Activated naive CD4-positive, alpha-beta T cell treated with anti-CD3 and anti-CD28 coated beads for 36 hours (primary cell): ENCODE measurements at regions of chr12 and their contacts with region 1.

Region 1: GRCh38 chr12:30847259-30847658 is 79.3 kb upstream of the TSPAN11 start:
- DNase-seq: peak; percentile 32
- H3K4me3 Mint-ChIP-seq: no peak overlapping the region
- H3K27ac Mint-ChIP-seq: no peak overlapping the region
- H3K4me1 Mint-ChIP-seq: peaks cover 4% of the 10 kb centered on the region
- H3K27me3 Mint-ChIP-seq: peaks cover 5% of the 10 kb centered on the region

Region 2: DNA sequence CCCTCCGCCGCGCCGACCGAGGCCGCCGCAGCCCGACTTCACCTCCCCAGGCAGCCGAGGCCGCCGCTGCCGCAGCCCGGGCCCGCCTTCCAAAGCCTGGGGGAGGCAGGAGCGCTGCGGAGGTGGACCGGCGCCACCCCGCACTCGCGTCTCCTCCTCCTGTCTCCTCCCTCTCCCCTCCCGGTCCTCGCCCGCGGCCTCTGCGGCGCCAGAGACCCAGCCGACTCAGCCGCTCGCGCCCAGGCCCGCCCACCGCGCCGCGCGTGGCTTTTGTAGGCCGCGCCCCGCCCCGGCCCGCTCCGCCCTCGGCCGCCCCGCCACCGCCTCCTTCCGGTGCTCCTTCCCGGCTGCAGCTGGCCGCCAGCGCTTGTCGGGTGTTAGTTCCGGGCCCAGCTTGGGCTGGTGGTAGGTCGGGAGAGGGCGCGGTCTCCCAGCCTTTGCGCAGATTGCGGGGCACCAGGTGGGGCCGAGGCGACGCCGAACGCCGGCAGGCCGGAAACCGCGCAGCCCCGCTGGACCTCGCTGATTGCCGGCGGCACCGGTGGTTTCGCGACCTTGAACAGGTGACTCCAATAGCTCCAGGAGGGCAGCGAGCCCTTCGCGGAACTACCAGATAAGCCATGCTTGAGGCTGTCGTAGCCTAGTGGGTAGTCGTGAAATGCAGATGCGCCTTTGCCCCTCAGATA is 92.4 kb before region 1 on chr12 and contains the start of gene CAPRIN2:
- CTCF ChIA-PET with region 1: interaction called, 7 read pairs
- intact Hi-C with region 1: loop called (anchors 2 kb)
- DNase-seq: peak; percentile 95
- H3K4me3 Mint-ChIP-seq: peak within 1 kb of the TSS; percentile 94
- H3K27ac Mint-ChIP-seq: peak within 1 kb of the TSS; percentile 51
- H3K4me1 Mint-ChIP-seq: peaks cover 38% of the 10 kb centered on the region
- H3K27me3 Mint-ChIP-seq: no peaks in the 10 kb centered on the region
- total RNA-seq, gene CAPRIN2: 10.3 to 11.3 TPM

Region 3: DNA sequence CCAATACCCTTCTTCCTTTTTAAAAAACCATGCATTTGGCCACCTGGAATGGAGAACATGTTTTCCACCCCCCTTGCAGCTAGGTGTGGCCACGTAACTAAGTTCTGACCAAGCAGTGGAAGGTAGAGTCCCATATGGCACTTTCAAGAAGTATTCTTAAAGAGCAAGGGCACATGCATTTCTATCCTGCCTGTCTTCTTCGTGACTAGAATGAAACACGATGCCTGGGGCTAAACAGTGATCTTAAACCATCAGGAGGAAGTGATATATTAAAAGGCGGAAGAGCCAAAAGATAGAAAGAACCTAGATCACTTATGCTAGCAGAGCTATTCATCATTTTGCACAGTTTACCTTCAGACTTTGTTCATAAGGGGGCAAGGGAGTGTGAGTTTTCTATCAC is 210.4 kb after region 1 on chr12:
- CTCF ChIA-PET with region 1: no interaction called
- intact Hi-C with region 1: loop called (anchors 5 kb)
- DNase-seq: no peak
- H3K4me3 Mint-ChIP-seq: no peak overlapping the region
- H3K27ac Mint-ChIP-seq: no peak overlapping the region
- H3K4me1 Mint-ChIP-seq: peaks cover 5% of the 10 kb centered on the region
- H3K27me3 Mint-ChIP-seq: no peaks in the 10 kb centered on the region

Region 4: DNA sequence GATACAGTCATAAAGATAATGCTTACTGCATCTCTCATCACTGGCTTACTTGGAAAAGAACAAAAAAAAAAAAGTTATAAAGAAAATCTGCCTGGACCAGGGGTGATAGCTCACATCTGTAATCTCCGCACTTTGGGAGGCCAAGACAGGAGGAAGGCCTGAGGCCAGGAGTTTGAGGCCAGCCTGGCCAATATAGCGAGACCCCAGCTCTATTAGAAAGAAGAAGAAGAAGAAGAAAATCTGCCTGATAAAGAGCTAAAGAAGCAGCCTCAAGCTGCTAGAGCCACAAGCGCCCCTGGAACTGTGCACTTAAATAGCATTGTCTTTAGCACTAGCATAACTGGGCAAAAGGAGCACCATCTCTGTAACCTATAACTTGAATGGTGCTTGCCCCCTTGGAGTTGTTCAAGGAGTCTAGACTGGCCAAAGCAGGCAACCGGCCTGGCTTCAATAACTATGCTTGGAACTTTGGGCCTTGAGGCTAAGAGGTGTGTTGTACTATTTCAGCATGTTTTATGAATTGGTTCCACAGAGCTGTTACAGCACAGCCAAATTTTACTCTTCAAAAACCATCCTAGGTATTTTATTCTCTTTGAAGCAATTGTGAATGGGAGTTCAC is 425.5 kb after region 1 on chr12:
- CTCF ChIA-PET with region 1: interaction called, 20 read pairs
- intact Hi-C with region 1: loop called (anchors 1 kb)
- DNase-seq: no peak
- H3K4me3 Mint-ChIP-seq: no peak overlapping the region
- H3K27ac Mint-ChIP-seq: no peak overlapping the region
- H3K4me1 Mint-ChIP-seq: no peaks in the 10 kb centered on the region
- H3K27me3 Mint-ChIP-seq: no peaks in the 10 kb centered on the region

Region 5: DNA sequence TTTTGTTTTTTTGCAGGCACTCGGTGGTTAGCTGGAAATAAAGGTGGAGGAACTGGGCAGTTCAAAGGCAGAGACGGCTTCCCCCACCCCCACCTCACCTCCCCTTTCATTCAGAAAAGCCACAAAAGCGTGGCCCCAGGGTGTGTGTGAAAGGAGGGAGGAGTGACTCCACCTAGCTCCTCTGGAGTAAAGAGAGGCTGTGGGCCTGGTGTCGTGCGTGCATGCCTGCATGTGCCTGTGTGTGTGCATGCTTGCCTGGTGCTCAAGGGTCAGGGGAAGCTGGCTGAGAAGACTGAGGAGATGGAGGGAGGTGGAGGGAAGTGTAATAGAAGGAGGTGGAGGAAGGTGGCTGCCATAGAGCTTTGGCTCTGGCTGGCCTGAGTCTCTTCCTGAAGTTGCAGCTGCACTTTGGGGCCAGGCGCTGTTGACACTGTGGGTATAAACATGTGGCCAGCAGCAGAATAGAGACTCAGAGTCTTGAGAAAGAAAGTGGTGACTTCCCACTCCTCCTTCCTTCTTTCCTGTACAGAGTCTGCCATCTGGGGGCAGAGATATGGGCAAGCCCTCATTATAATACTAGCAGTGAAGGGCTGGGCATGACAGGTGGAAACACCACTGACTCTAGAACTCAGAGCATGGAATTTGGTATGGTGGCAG is 515.6 kb after region 1 on chr12:
- CTCF ChIA-PET with region 1: no interaction called
- intact Hi-C with region 1: loop called (anchors 1 kb)
- DNase-seq: peak; percentile 53
- H3K4me3 Mint-ChIP-seq: peak overlapping the region; percentile 38
- H3K27ac Mint-ChIP-seq: no peak overlapping the region
- H3K4me1 Mint-ChIP-seq: peaks cover 14% of the 10 kb centered on the region
- H3K27me3 Mint-ChIP-seq: no peaks in the 10 kb centered on the region